Heart left ventricle (tissue), 16 donors: ENCODE measurements at regions of chr10 and their contacts with region 1.

Region 1: DNA sequence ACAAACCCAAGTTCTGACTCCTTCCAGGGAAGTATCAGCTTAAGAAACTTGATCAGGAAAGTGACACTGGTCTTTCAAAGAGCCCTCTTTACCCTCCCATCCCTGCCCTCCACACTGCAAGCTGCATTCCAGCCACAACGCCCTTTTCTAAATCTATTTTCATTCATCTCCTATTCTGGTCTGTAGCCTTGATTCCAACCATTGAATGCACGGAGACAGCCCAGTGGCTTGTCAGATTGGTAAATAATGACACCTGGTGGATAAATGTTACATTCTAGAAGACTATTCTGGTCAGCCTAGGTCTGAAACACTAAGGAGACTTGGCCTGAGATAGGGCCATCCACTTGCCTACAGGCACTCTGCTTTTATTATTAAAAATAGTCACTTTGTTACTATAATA is 20.9 kb downstream of the MORN4 start:
- DNase-seq: no peak
- ATAC-seq: peak; percentile 54 to 72 (median 64)
- H3K4me3 ChIP-seq: no peak overlapping the region
- H3K27ac ChIP-seq: peak overlapping the region in 10 of 12 donors; percentile 8 to 91 (median 79)
- H3K4me1 ChIP-seq: peaks cover 0 to 41% (median 7%) of the 10 kb centered on the region in 12 donors
- H3K27me3 ChIP-seq: no peaks in the 10 kb centered on the region
- CTCF ChIP-seq: peak; percentile 31 to 67 (median 55)
- POLR2A ChIP-seq: no peak

Region 2: GRCh38 chr10:97407211-97407951 is 205.0 kb before region 1 on chr10:
- intact Hi-C with region 1: loop called in 5 of 10 experiments (anchors 2 to 10 kb)
- DNase-seq: peak in 4 of 5 donors; percentile 47 to 51 (median 48)
- ATAC-seq: peak; percentile 81 to 91 (median 88)
- H3K4me3 ChIP-seq: peak overlapping the region in 2 of 12 donors; percentile 18 to 26
- H3K27ac ChIP-seq: peak overlapping the region in 2 of 12 donors; percentile 16 to 69
- H3K4me1 ChIP-seq: peaks cover 0 to 28% (median 6%) of the 10 kb centered on the region in 12 donors
- H3K27me3 ChIP-seq: no peaks in the 10 kb centered on the region
- CTCF ChIP-seq: peak; percentile 76 to 91 (median 82)
- POLR2A ChIP-seq: no peak

Region 3: GRCh38 chr10:97463363-97464132 is 148.8 kb before region 1 on chr10:
- intact Hi-C with region 1: loop called in 9 of 10 experiments (anchors 2 to 5 kb)
- DNase-seq: peak in 2 of 5 donors; percentile 28 to 35
- ATAC-seq: peak in 3 of 4 donors; percentile 54 to 68 (median 64)
- H3K4me3 ChIP-seq: no peak overlapping the region
- H3K27ac ChIP-seq: peak overlapping the region in 7 of 12 donors; percentile 18 to 40 (median 32)
- H3K4me1 ChIP-seq: peaks cover 0 to 18% (median 0%) of the 10 kb centered on the region in 12 donors
- H3K27me3 ChIP-seq: no peaks in the 10 kb centered on the region
- CTCF ChIP-seq: peak; percentile 70 to 92 (median 78)
- POLR2A ChIP-seq: no peak

Region 4: GRCh38 chr10:97572214-97572989 is 40.0 kb before region 1 on chr10 and contains the start of gene ANKRD2:
- intact Hi-C with region 1: loop called (anchors 1 to 5 kb)
- DNase-seq: peak; percentile 82 to 92 (median 87)
- ATAC-seq: peak; percentile 64 to 76 (median 72)
- H3K4me3 ChIP-seq: peak within 1 kb of the TSS in 9 of 12 donors; percentile 13 to 43 (median 36)
- H3K27ac ChIP-seq: peak within 1 kb of the TSS; percentile 71 to 95 (median 88)
- H3K4me1 ChIP-seq: peaks cover 0 to 50% (median 24%) of the 10 kb centered on the region in 12 donors
- H3K27me3 ChIP-seq: no peaks in the 10 kb centered on the region
- CTCF ChIP-seq: peak; percentile 69 to 85 (median 80)
- POLR2A ChIP-seq: no peak
- total RNA-seq, gene ANKRD2: 56.7 to 2,367 (median 517) TPM

Region 5: DNA sequence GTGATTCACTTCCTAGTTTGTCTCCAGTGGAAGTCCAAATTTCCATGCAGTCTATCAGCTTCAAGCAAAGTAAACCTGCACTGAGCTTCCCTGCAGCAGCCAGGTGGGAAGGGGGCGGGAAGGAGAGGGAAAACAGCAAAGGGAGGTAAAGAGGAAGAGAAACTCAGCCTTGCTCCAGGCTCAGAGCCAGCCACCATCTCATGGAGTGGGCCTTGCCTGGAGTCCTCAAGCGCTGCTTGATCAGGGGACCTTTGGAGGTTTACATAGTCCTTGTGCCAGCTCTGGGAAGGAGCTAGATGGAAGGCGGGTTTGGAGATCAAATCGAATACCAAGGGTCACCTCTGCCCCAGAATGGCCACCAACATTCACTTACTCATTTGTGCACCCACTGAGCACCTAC is 410.6 kb after region 1 on chr10:
- intact Hi-C with region 1: no loop called
- DNase-seq: no peak
- ATAC-seq: no peak
- H3K4me3 ChIP-seq: no peak overlapping the region
- H3K27ac ChIP-seq: no peak overlapping the region
- H3K4me1 ChIP-seq: no peaks in the 10 kb centered on the region
- H3K27me3 ChIP-seq: peaks cover 0 to 39% (median 12%) of the 10 kb centered on the region in 9 donors
- CTCF ChIP-seq: no peak
- POLR2A ChIP-seq: no peak